Activated CD4-positive, alpha-beta T cell treated with anti-CD3 and anti-CD28 coated beads, Interleukin-2, amount 10 ng/mL, durations not matched to agents 24 days and 14 days (primary cell): ENCODE measurements at regions of chr11 and their contacts with region 1.

Region 1: DNA sequence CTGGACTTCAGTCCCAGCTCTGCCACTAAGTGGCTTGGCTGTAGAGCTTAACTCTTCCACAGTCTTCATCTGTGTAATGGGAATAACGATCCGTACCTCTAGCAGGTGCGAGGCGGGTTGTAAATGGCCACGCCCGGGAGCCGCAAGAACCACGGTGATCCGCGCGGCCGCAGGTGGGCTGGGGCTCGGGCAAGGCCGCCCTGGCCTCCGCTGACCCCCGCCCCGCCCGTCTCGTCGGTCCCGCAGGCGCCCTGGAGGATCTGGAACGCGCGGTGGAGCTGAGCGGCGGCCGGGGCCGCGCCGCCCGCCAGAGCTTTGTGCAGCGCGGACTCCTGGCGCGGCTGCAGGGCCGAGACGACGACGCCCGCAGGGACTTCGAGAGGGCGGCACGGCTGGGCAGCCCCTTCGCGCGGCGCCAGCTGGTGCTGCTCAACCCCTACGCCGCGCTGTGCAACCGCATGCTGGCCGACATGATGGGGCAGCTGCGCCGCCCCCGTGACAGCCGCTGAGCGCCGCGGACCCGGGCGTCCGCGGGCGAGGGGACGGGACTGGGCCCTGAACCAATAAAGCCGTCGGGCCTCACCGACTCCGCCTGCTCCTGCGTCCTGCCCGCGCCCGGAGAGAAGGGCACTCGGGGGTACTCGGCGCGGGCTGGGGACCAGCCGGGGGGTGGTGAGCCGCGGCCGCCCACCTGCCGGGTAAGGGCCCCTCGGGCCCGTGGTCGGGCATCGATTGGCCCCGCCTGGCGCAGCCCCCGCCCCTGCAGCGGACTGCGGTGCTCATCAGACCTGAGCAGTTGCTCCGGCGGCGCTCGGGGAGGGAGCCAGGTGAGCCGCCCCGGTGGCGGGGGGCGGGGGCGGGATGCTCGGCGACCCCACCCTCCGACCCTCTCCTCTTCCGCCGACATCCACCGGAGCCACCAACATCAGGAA is at the start of gene TMEM25:
- DNase-seq: peak; percentile 94
- H3K4me3 Mint-ChIP-seq: peak within 1 kb of the TSS; percentile 84
- H3K27ac Mint-ChIP-seq: peak within 1 kb of the TSS; percentile 59
- H3K4me1 Mint-ChIP-seq: peaks cover 24% of the 10 kb centered on the region
- H3K27me3 Mint-ChIP-seq: no peaks in the 10 kb centered on the region
- total RNA-seq, gene TMEM25: 13.0 and 14.1 TPM in 2 replicates

Region 2: DNA sequence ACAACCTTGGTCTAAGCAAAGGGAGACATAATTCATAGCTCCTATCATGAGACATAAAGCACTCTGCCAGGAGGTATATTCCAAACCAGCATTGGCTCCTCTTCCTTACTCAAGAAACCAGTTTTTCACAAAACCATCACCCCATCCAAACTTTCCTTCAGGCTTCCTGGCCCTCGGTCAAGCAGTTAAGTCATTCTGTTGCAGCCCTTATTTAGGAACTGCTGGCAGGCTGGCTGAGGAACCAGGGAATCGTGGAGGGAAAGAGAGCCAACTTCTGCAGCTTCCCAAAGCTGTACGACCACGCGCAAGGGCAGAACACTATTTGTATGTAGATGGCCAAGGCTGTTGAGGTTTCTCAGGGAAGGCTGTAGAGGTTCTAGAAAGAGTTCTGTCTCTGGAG is 34.4 kb after region 1 on chr11:
- intact Hi-C with region 1: loop called (anchors 1 kb)
- DNase-seq: no peak
- H3K4me3 Mint-ChIP-seq: peak overlapping the region; percentile 57
- H3K27ac Mint-ChIP-seq: no peak overlapping the region
- H3K4me1 Mint-ChIP-seq: peaks cover 13% of the 10 kb centered on the region
- H3K27me3 Mint-ChIP-seq: no peaks in the 10 kb centered on the region